ENCODE measurements at regions of chr9 and their contacts with region 1.

Region 1: GRCh38 chr9:79129865-79130480 is 441.8 kb upstream of the TLE4 start:
- H3K4me3 Mint-ChIP-seq: no peak overlapping the region
- H3K27ac Mint-ChIP-seq: no peak overlapping the region
- H3K4me1 Mint-ChIP-seq: no peaks in the 10 kb centered on the region
- H3K27me3 Mint-ChIP-seq: no peaks in the 10 kb centered on the region

Region 2: DNA sequence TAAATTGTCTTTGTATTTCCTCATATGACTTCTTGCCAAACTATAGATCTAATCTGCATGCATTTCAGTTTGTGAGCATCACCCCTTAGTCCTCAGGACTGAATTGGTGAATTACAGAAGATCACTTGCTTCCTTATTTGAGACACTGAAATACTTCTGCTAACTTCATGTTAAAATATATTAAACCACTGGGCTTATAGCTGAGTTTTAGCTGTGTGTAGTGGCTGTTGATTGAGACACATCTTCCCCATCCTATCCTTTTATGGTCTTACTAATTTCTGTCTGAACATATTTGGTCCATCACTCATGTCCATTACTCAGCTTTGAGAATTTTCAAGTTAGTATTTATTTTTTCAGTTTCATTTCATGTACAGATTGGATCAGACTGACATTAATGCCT is 537.2 kb before region 1 on chr9:
- intact Hi-C with region 1: loop called (anchors 10 kb)
- H3K4me3 Mint-ChIP-seq: no peak overlapping the region
- H3K27ac Mint-ChIP-seq: no peak overlapping the region
- H3K4me1 Mint-ChIP-seq: no peaks in the 10 kb centered on the region
- H3K27me3 Mint-ChIP-seq: no peaks in the 10 kb centered on the region

Region 3: DNA sequence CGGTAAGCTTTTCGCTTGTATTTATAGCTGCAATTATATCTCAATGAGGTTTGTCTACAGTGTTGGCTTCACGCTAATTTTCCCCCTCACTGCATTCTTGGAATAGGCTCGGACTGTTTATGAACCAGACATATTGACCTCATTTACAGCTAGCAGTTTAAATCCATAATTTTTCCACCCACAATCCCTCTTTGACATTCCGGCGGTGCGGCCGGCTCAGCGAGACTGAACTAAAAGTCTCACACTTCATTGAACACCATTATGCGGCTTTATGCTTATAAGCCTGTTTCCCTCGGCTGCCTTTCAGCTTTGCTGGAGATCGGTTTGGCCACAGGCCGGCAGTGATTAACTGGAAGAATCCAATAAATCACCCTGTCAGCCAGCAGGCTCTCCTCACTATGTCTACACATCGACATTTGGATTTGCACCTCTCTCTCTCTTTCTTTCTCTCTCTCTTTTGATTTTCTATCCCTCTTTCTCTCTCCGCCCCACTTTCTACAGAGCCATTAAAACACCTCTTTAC is 126.8 kb after region 1 on chr9:
- intact Hi-C with region 1: loop called (anchors 10 kb)
- H3K4me3 Mint-ChIP-seq: no peak overlapping the region
- H3K27ac Mint-ChIP-seq: no peak overlapping the region
- H3K4me1 Mint-ChIP-seq: peaks cover 23% of the 10 kb centered on the region
- H3K27me3 Mint-ChIP-seq: no peaks in the 10 kb centered on the region

Region 4: GRCh38 chr9:79565245-79565644 is 435.3 kb after region 1 on chr9:
- intact Hi-C with region 1: loop called (anchors 10 kb)
- H3K4me3 Mint-ChIP-seq: no peak overlapping the region
- H3K27ac Mint-ChIP-seq: no peak overlapping the region
- H3K4me1 Mint-ChIP-seq: peaks cover 16% of the 10 kb centered on the region
- H3K27me3 Mint-ChIP-seq: peaks cover 6% of the 10 kb centered on the region

Region 5: GRCh38 chr9:79955300-79955699 is 825.3 kb after region 1 on chr9:
- intact Hi-C with region 1: loop called (anchors 5 kb)
- H3K4me3 Mint-ChIP-seq: no peak overlapping the region
- H3K27ac Mint-ChIP-seq: no peak overlapping the region
- H3K4me1 Mint-ChIP-seq: no peaks in the 10 kb centered on the region
- H3K27me3 Mint-ChIP-seq: no peaks in the 10 kb centered on the region

Region 6: DNA sequence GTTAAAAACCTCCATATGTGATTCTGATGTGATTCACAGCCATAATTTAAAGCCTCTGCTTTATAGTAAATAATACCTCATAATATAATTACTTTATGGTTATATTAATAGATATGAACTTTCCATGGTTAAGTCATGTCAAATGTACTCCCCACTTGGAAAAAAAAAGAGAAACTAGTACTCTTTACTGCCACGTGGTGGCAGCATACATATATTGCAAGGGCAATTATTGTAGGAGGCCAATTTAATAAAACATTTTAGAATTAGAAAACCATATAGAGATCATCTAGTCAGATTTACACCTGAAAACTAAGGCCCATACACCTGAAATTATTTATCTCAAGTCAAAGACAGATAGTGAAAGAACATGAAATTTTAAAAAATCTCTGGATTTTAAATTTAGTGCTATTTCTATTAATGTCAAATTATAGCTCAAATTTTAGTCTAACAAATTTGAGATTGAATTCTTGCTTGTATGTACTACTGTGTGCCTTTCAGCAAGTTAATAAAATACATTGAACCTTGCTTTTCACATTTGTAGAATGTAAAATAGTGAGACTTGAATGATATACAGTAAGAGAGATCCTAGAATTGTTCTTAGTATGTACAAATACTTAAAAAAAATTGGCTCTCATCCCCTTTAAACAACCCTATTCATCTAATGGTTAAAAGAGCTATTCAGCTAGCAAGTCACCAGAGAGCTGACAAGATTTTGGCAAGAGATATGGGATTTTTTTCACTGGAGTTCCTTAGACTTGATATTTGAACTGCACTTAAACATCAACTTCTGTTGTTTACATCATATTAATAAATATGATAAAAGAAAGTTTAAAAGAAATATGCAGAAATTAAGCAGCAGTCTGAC is 1045.5 kb after region 1 on chr9:
- intact Hi-C with region 1: loop called (anchors 2 kb)
- H3K4me3 Mint-ChIP-seq: no peak overlapping the region
- H3K27ac Mint-ChIP-seq: no peak overlapping the region
- H3K4me1 Mint-ChIP-seq: no peaks in the 10 kb centered on the region
- H3K27me3 Mint-ChIP-seq: no peaks in the 10 kb centered on the region